Gastrocnemius medialis (tissue), 4 donors: ENCODE measurements at regions of chr15 and their contacts with region 1.

Region 1: GRCh38 chr15:85361323-85361722 is 19.1 kb upstream of the AKAP13 start:
- DNase-seq: no peak
- ATAC-seq: no peak
- H3K4me3 ChIP-seq: no peak overlapping the region
- H3K27ac ChIP-seq: no peak overlapping the region
- H3K4me1 ChIP-seq: peaks cover 14 to 16% of the 10 kb centered on the region in 2 donors
- H3K27me3 ChIP-seq: peaks cover 0 to 11% (median 0%) of the 10 kb centered on the region in 3 donors
- CTCF ChIP-seq: no peak
- POLR2A ChIP-seq: no peak

Region 2: GRCh38 chr15:85421116-85421925 is 60.0 kb after region 1 on chr15:
- in situ Hi-C with region 1: loop called in 1 of 4 experiments (anchors 10 kb)
- intact Hi-C with region 1: no loop called
- DNase-seq: no peak
- ATAC-seq: no peak
- H3K4me3 ChIP-seq: no peak overlapping the region
- H3K27ac ChIP-seq: no peak overlapping the region
- H3K4me1 ChIP-seq: peaks cover 13 to 16% of the 10 kb centered on the region in 2 donors
- H3K27me3 ChIP-seq: no peaks in the 10 kb centered on the region
- CTCF ChIP-seq: no peak
- POLR2A ChIP-seq: no peak